ENCODE measurements at regions of chr11 and their contacts with region 1.

Region 1: DNA sequence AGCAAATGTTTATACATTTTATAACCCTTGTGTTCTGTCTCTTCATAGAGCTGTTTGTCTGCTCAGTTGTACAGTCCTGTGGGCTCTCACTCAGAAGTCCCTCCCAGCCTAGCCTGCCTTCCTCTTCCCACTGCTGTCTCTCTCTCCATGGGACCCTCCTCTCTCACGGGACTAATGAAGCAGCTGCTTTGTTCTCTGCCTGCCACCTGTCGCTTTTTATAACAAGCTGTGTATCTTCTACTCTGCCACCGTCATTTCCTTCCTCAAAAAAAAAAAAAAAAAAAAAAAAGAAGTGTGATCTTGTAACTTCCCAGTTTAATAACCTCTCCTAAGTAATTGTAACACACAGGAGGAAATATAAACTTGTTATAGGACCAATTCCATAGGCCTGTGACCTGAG is 92.2 kb upstream of the ALKBH3 start:
- DNase-seq: no peak
- H3K4me3 ChIP-seq: no peak overlapping the region
- H3K27ac ChIP-seq: no peak overlapping the region
- H3K4me1 ChIP-seq: no peaks in the 10 kb centered on the region
- H3K27me3 ChIP-seq: no peaks in the 10 kb centered on the region
- CTCF ChIP-seq: no peak
- EP300 ChIP-seq: no peak
- POLR2A ChIP-seq: no peak
- RAD21 ChIP-seq: no peak

Region 2: DNA sequence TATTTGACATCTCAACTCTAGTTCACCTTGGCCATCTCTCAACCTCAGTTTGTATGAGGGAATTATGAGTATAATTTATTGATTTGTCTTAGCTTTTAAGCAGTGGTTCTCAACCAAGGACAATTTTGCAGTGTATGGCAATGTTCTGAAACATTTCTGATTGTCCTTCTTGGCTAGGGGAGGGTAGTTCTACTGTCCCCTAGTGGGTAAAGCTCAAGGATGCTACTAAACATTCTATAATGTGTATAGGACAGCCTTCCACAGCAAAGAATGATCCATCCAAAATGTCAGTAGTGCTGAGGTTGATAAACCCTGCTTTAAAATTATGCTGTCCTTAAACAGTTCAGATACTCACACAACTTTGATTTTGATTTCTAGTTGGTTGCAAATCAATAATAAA is 14.1 kb after region 1 on chr11:
- CTCF ChIA-PET with region 1: interaction called, 13 read pairs
- POLR2A ChIA-PET with region 1: no interaction called
- DNase-seq: no peak
- H3K4me3 ChIP-seq: no peak overlapping the region
- H3K27ac ChIP-seq: no peak overlapping the region
- H3K4me1 ChIP-seq: no peaks in the 10 kb centered on the region
- H3K27me3 ChIP-seq: no peaks in the 10 kb centered on the region
- CTCF ChIP-seq: peak in 1 of 3 experiments; percentile 46; a peak in 2 of 4 replicates
- EP300 ChIP-seq: no peak
- POLR2A ChIP-seq: no peak
- RAD21 ChIP-seq: peak; percentile 14 to 41; a peak in 3 of 4 replicates

Measured in H1 (cell line).